ENCODE measurements at regions of chr22 and their contacts with region 1.

Region 1: GRCh38 chr22:19178656-19179496 is at the start of gene SLC25A1:
- DNase-seq: peak; percentile 96
- ATAC-seq: peak; percentile 94
- total RNA-seq, gene SLC25A1: 28.7 TPM

Region 2: GRCh38 chr22:19143967-19144400 is 34.9 kb before region 1 on chr22:
- intact Hi-C with region 1: loop called (anchors 2 kb)
- DNase-seq: no peak
- ATAC-seq: no peak

Region 3: DNA sequence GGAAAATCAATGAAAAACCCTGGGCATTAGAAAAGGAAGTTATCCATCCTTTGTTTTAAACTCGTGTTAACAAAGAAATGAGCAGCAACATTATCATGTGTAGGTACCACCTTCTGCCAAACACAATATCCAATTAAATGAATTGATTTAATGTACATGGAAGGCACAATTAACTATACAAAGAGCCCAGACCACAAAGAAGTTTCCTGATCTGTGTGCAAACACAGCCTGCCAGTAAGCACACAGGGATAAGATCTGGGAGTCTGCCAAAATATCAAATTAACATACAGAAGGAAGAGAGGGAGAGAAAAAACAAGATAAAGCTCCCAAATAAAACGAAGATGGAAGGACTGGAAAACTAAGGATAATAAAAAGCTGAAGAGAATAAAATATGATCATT is 53.7 kb after region 1 on chr22:
- intact Hi-C with region 1: no loop called
- DNase-seq: no peak
- ATAC-seq: no peak

Region 4: GRCh38 chr22:19271856-19272535 is 93.1 kb after region 1 on chr22:
- intact Hi-C with region 1: no loop called
- DNase-seq: no peak
- ATAC-seq: no peak